Testis (tissue), 5 donors: ENCODE measurements at regions of chr9 and their contacts with region 1.

Region 1: DNA sequence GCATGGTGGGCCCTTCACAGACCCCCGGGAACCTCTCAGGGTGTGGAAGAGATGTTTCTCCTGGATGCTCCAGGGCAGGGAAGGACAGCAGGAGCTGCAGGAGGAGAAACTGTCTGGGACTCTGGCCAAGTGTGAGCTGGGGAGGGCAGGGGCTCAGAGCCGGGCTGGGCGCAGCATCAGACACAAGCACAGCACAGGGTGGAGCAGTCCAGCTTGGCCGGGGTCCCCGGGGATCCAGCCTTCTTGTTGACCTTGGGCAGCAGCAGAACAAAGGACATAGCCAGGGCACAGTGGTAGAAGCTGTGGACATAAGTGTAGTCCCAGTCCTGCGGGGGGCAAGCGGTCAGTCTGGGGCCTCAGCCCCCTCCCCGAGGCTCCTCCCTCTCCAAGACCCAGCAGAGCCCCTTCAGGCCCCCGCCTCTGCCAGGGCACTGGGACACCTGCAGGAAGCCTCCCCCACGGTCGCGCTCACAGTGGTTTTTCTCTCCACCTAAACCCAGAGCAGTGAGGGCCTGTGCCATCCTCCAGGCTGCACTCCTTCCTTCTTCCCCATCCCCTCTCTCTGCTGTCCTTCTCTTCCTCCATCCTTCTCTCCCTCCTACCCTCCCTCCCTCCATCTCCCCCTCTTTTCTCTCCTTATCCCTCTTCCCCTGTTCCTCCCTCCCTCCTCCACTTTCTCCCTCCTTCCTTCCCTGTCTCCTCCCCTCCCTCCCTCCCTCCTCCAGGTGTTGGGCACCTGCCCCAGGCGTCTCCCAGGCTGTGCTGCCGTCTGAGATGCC is 10.1 kb downstream of the MYMK start:
- DNase-seq: peak; percentile 79
- H3K4me3 ChIP-seq: no peak overlapping the region
- H3K27ac ChIP-seq: no peak overlapping the region
- H3K4me1 ChIP-seq: peaks cover 25% of the 10 kb centered on the region
- H3K27me3 ChIP-seq: no peaks in the 10 kb centered on the region
- CTCF ChIP-seq: no peak
- POLR2A ChIP-seq: no peak

Region 2: DNA sequence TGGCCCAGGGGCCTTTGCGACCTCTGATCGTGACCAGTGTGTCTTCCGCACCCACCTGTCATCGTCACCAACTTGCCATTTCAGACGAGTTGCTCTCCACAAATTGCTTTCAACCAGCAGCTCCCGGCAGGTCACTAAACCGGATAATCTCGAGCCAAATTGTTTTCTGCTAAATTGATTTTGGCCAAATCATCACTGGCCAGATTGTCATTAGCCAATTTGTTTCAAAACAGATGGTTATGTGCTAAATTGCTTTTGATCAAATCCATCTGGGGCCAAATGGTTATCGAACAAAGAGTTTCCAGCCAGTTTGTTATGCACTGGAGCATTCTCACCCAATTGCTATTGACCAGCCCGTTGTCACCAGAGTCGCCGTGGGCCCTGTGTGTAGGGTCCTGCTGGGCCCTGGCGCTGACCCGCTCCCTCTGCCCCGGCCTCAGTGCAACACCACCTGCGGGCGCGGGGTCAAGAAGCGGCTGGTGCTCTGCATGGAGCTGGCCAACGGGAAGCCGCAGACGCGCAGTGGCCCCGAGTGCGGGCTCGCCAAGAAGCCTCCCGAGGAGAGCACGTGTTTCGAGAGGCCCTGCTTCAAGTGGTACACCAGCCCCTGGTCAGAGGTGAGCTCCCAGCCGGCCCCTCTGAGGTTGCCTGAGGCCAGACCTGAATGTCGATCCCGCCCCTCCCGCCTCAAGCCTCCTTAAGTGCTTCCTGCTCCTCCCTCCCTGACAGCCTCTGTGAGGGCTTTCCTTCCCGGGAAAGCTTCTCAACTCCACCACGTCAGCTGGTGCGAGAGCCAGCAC is 55.4 kb after region 1 on chr9:
- intact Hi-C with region 1: loop called (anchors 5 kb)
- DNase-seq: no peak
- H3K4me3 ChIP-seq: no peak overlapping the region
- H3K27ac ChIP-seq: no peak overlapping the region
- H3K4me1 ChIP-seq: peaks cover 21% of the 10 kb centered on the region
- H3K27me3 ChIP-seq: no peaks in the 10 kb centered on the region
- CTCF ChIP-seq: no peak
- POLR2A ChIP-seq: no peak